Heart right ventricle (tissue), 16 donors: ENCODE measurements at regions of chr7 and their contacts with region 1.

Region 1: DNA sequence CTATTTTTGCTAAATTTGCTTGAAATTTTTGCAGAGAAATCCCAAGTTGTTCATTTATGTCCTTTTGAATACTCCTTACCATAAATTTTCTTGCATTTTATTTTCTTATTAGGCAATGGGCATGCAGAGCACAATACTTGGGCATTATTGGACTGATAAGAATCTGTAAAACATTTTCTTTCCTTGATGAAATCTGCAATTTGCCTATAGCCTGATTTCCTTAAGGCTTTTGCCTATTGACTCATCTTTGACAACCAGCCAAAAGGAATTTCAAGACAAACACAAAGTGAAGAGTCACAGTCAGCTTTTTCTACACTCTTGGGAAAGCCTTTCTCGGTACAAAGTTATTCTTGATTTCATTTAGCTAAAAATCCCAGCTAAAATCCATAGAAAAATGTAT is 30.6 kb upstream of the GNAT3 start:
- DNase-seq: no peak
- ATAC-seq: no peak
- H3K4me3 ChIP-seq: no peak overlapping the region
- H3K27ac ChIP-seq: peak overlapping the region in 9 of 10 donors; percentile 3 to 48 (median 13)
- H3K4me1 ChIP-seq: peaks cover 0 to 31% (median 12%) of the 10 kb centered on the region in 9 donors
- H3K27me3 ChIP-seq: no peaks in the 10 kb centered on the region
- CTCF ChIP-seq: no peak

Region 2: DNA sequence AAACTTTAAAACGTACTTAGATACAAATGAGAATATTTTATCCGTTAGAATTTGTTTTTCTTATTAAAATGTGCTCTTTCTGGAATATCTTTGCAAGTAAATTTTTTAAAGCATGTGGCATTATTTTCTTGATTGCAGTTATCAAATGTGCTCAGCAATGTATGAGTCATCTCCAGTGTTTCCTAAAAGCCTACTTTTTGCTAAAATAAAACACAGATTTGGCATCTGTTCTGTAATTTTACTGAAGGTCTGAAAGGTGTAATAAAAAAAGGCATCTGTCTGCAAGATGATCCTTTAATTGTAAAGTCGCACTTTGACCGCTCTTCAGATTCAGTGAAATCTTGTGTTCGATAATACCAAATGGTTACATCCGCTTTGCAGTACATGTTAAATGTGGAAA is 34.0 kb before region 1 on chr7:
- intact Hi-C with region 1: loop called in 1 of 10 experiments (anchors 5 kb)
- DNase-seq: no peak
- ATAC-seq: no peak
- H3K4me3 ChIP-seq: no peak overlapping the region
- H3K27ac ChIP-seq: no peak overlapping the region
- H3K4me1 ChIP-seq: peaks cover 0 to 7% (median 0%) of the 10 kb centered on the region in 9 donors
- H3K27me3 ChIP-seq: no peaks in the 10 kb centered on the region
- CTCF ChIP-seq: no peak